Activated CD4-positive, alpha-beta memory T cell treated with anti-CD3 and anti-CD28 coated beads for 36 hours (primary cell): ENCODE measurements at regions of chr22 and their contacts with region 1.

Region 1: DNA sequence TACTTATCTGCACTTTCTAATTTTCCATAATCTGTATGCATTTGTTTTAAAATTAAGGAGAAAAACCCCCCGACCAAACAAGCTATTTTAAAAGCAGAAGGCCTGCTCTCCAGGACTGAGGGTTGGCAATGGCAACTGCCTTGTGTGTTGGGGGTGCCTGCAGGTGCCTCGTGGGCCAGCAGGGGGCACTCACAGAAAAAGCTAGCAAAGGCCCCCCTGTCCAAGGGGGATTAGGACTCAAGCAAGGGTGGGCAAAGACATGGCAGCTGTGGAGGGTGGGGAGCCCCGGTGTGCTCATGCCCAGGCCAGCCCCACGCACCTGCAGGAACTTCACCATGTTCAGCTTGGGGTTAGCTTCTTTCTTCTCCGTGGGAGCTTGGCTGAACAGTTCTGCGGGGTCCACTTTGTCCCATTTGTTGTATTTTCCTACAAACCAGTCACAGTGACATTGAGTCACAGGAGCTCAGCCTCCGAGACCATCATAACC is 10.3 kb downstream of the TOP3B start:
- DNase-seq: peak; percentile 68
- H3K4me3 Mint-ChIP-seq: no peak overlapping the region
- H3K27ac Mint-ChIP-seq: no peak overlapping the region
- H3K4me1 Mint-ChIP-seq: no peaks in the 10 kb centered on the region
- H3K27me3 Mint-ChIP-seq: no peaks in the 10 kb centered on the region

Region 2: DNA sequence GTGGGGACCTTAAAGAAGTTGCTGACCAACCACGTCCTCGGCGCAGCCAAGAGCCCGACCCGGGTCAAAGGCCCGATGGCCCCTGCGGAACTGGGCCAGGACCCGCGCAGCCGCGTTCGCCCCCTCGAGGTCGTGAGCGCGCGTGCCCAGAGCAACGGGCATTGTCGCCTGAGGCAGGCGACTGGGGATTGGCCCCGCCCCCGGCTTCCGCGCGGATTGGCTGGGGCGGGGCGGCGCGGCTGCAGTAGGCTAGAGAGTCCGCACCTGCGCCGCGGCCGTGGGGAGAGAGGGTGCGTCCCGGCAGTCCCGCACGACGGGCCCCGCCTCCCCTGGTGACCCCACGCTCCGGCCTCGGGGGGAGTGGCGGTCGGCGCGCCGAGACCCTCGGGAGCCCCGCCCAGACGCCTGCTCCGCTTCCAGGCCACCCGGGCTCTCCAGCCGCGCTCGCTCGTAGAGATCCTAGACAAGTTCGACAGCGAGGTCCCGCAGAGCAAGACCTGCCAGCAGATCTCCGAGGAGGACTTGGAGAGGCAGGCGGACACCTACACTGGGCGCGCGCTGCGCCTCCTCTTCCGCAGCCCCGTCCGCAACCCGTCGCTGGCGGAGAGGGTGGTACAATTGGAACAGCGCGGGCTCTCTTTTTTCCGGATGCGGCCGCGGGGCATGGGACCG is 314.8 kb before region 1 on chr22:
- CTCF ChIA-PET with region 1: no interaction called
- POLR2A ChIA-PET with region 1: no interaction called
- intact Hi-C with region 1: no loop called
- DNase-seq: peak; percentile 84
- H3K4me3 Mint-ChIP-seq: peak overlapping the region; percentile 84
- H3K27ac Mint-ChIP-seq: no peak overlapping the region
- H3K4me1 Mint-ChIP-seq: peaks cover 15% of the 10 kb centered on the region
- H3K27me3 Mint-ChIP-seq: no peaks in the 10 kb centered on the region

Region 3: GRCh38 chr22:21982338-21982965 is 10.1 kb after region 1 on chr22 and contains the start of gene TOP3B:
- CTCF ChIA-PET with region 1: interaction called, 37 read pairs
- POLR2A ChIA-PET with region 1: no interaction called
- intact Hi-C with region 1: no loop called
- DNase-seq: peak; percentile 90
- H3K4me3 Mint-ChIP-seq: peak within 1 kb of the TSS; percentile 89
- H3K27ac Mint-ChIP-seq: peak within 1 kb of the TSS; percentile 77
- H3K4me1 Mint-ChIP-seq: peaks cover 32% of the 10 kb centered on the region
- H3K27me3 Mint-ChIP-seq: no peaks in the 10 kb centered on the region
- total RNA-seq, gene TOP3B: 28.8 to 30.4 TPM

Region 4: GRCh38 chr22:21990445-21991303 is 18.3 kb after region 1 on chr22:
- CTCF ChIA-PET with region 1: interaction called, 20 read pairs
- POLR2A ChIA-PET with region 1: no interaction called
- intact Hi-C with region 1: no loop called
- DNase-seq: no peak
- H3K4me3 Mint-ChIP-seq: no peak overlapping the region
- H3K27ac Mint-ChIP-seq: no peak overlapping the region
- H3K4me1 Mint-ChIP-seq: no peaks in the 10 kb centered on the region
- H3K27me3 Mint-ChIP-seq: peaks cover 4% of the 10 kb centered on the region